ENCODE measurements at regions of chr10 and their contacts with region 1.

Region 1: DNA sequence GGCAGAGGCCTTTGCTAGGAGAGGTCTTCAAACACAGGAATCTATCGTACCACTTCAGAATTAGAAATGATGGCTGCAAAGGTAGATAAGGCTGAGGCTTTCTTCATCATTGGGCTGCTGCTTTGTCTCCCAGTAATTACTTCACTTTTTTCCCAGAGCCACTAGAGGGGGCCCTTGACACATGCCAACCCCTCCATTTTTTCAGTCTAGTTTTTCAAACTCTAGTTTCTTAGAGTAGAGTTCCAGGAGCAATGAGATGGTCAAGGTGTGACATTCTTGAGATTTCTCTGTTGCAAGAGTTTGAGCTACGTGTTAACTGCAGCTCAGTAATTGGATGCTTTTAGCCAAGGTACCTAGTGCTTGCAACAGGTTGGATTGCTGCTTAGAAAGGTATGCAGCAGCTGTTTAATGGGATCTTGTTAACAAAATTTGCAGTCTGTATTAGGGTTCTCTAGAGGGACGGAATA is 33.8 kb upstream of the RBM20 start:
- DNase-seq: peak; percentile 57
- H3K4me3 Mint-ChIP-seq: no peak overlapping the region
- H3K27ac Mint-ChIP-seq: no peak overlapping the region
- H3K4me1 Mint-ChIP-seq: peaks cover 30% of the 10 kb centered on the region
- H3K27me3 Mint-ChIP-seq: no peaks in the 10 kb centered on the region

Region 2: DNA sequence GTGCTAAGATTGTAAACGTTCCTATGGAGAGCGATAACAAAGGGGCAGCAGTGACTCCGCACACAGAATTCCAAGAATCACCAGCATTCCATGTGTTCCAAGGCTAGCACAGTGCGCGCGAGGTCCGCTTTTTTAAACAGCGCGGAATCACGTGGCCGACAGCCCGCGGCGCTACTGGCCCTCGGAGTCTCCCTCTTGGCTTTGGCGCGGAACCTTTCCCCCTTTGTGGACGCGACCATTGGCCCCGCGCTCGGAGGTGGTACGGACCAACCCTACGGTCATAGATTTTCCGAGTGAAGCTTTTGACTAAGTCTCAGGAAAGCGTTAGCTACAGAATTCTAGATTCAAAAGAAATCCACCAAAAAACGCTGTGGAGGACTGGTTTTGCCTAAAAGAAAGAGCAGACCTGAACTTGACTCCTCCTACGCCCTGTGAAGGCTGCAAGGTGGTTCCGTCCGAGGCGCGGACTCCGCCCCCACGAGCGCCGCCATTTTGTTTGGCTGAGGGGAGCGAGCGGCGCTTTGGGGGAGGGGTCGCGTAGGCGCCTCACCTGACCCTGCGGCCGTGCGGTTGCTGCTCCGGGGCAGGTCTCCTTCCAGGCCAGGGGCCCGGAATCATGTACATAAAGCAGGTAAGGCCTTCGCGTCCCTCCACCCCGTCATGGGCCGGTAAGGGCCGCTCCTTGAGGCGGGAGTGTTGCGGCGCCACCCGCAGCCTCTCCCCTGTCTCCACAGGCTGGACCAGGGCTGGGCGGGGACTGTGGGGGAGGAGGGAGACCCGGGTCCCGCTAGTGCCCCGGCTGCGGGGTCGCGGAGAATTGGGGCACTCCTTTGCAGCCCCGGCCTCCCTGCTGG is 42.9 kb before region 1 on chr10 and contains the start of gene SMC3:
- CTCF ChIA-PET with region 1: no interaction called
- POLR2A ChIA-PET with region 1: no interaction called
- DNase-seq: peak; percentile 92
- H3K4me3 Mint-ChIP-seq: peak within 1 kb of the TSS; percentile 95
- H3K27ac Mint-ChIP-seq: peak within 1 kb of the TSS; percentile 95
- H3K4me1 Mint-ChIP-seq: peaks cover 38% of the 10 kb centered on the region
- H3K27me3 Mint-ChIP-seq: peaks cover 1% of the 10 kb centered on the region
- total RNA-seq, gene SMC3: 81.0 to 83.0 TPM

Region 3: DNA sequence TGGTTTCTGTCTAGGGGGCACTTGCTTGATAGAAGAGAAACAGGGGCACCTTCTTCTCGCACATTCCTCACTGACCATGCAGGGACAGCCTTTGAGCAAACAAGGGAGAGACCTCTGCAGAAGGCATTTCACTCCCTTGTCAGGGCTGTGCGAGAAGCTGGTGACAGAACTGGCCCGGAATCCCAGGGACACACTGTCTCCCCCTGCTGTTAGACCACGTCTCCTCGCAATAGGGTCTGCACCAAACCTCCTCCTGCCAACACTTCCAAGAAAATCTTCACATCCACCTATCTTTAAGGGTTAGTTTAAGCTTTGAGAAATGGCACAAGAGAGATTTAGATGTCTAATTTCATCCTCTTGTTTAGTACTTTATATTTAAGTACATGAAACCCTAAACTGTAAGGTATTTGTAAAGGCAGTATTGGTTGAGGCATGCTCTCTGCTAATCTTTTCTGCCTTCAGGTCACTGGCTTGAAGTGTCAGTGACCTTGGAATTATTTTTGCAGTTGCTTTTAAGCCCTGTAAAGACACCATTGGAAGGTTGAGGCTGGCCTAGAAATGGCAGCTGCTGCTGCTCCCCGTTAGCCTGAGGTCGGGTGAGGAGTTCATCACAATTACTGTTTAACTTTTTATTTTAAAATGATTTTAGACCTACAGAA is 70.8 kb after region 1 on chr10:
- CTCF ChIA-PET with region 1: interaction called, 22 read pairs
- POLR2A ChIA-PET with region 1: no interaction called
- DNase-seq: peak; percentile 37
- H3K4me3 Mint-ChIP-seq: no peak overlapping the region
- H3K27ac Mint-ChIP-seq: no peak overlapping the region
- H3K4me1 Mint-ChIP-seq: no peaks in the 10 kb centered on the region
- H3K27me3 Mint-ChIP-seq: peaks cover 20% of the 10 kb centered on the region

Measured in activated CD4-positive, alpha-beta memory T cell treated with anti-CD3 and anti-CD28 coated beads, Interleukin-2, amount 10 ng/mL, durations not matched to agents 7 days and 5 days (primary cell).